ENCODE measurements at regions of chr15 and their contacts with region 1.

Region 1: DNA sequence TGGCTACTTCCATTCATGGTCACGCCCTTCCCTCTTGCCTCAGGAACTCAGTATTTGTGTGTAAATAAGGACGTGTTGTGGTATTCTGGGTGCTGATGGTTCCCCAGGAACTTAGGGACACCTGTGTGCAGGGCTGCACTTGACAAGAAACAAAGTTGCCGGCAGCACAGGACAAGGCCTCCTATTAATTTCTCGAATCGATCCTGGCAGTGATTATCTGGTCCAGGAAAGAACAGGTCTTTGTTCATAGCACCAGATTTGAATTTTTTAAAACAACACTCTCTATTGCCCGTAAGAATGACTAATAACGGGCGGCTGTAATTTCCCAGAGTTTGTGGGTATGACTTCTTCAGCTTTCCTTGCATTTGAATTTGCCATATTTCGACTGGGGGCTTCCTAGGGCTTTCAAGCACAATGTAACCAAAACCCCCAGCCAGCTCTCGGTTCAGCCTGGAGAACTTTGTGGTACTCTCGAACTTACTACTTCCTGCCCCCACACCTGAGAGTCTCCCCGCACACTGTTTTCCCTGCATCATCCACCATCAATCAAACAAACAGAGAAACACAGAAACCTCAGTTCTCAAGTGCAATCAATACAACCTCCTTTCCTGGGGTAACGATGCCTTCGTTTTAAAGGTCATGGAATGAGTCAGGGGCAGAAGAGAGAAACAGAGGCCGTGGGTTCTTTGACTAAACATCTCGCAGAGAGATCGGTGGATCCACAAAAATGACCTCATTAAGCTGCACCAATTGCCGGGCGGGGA is 241.7 kb upstream of the ICE2 start:
- DNase-seq: peak; percentile 86
- H3K4me3 Mint-ChIP-seq: peak overlapping the region; percentile 65
- H3K27ac Mint-ChIP-seq: peak overlapping the region; percentile 95
- H3K4me1 Mint-ChIP-seq: peaks cover 64% of the 10 kb centered on the region
- H3K27me3 Mint-ChIP-seq: no peaks in the 10 kb centered on the region

Region 2: GRCh38 chr15:60423537-60423936 is 297.1 kb before region 1 on chr15:
- CTCF ChIA-PET with region 1: no interaction called
- POLR2A ChIA-PET with region 1: no interaction called
- intact Hi-C with region 1: no loop called
- DNase-seq: peak; percentile 17
- H3K4me3 Mint-ChIP-seq: no peak overlapping the region
- H3K27ac Mint-ChIP-seq: no peak overlapping the region
- H3K4me1 Mint-ChIP-seq: peaks cover 19% of the 10 kb centered on the region
- H3K27me3 Mint-ChIP-seq: no peaks in the 10 kb centered on the region

Region 3: GRCh38 chr15:60592371-60593169 is 128.1 kb before region 1 on chr15:
- CTCF ChIA-PET with region 1: interaction called, 26 read pairs
- POLR2A ChIA-PET with region 1: interaction called, 12 read pairs
- intact Hi-C with region 1: no loop called
- DNase-seq: peak; percentile 91
- H3K4me3 Mint-ChIP-seq: peak overlapping the region; percentile 81
- H3K27ac Mint-ChIP-seq: peak overlapping the region; percentile 82
- H3K4me1 Mint-ChIP-seq: peaks cover 45% of the 10 kb centered on the region
- H3K27me3 Mint-ChIP-seq: no peaks in the 10 kb centered on the region

Region 4: GRCh38 chr15:60679256-60679655 is 41.4 kb before region 1 on chr15:
- CTCF ChIA-PET with region 1: no interaction called
- POLR2A ChIA-PET with region 1: interaction called, 3 read pairs
- intact Hi-C with region 1: loop called (anchors 5 kb)
- DNase-seq: no peak
- H3K4me3 Mint-ChIP-seq: no peak overlapping the region
- H3K27ac Mint-ChIP-seq: no peak overlapping the region
- H3K4me1 Mint-ChIP-seq: peaks cover 32% of the 10 kb centered on the region
- H3K27me3 Mint-ChIP-seq: no peaks in the 10 kb centered on the region

Region 5: GRCh38 chr15:60704129-60704528 is 16.5 kb before region 1 on chr15:
- CTCF ChIA-PET with region 1: interaction called, 6 read pairs
- POLR2A ChIA-PET with region 1: interaction called, 11 read pairs
- intact Hi-C with region 1: loop called (anchors 1 kb)
- DNase-seq: peak; percentile 66
- H3K4me3 Mint-ChIP-seq: peak overlapping the region; percentile 45
- H3K27ac Mint-ChIP-seq: peak overlapping the region; percentile 57
- H3K4me1 Mint-ChIP-seq: peaks cover 77% of the 10 kb centered on the region
- H3K27me3 Mint-ChIP-seq: no peaks in the 10 kb centered on the region

Region 6: GRCh38 chr15:60774829-60775463 is 54.3 kb after region 1 on chr15:
- CTCF ChIA-PET with region 1: no interaction called
- POLR2A ChIA-PET with region 1: interaction called, 5 read pairs
- intact Hi-C with region 1: loop called (anchors 1 kb)
- DNase-seq: peak; percentile 37
- H3K4me3 Mint-ChIP-seq: peak overlapping the region; percentile 11
- H3K27ac Mint-ChIP-seq: peak overlapping the region; percentile 86
- H3K4me1 Mint-ChIP-seq: peaks cover 71% of the 10 kb centered on the region
- H3K27me3 Mint-ChIP-seq: no peaks in the 10 kb centered on the region

Region 7: DNA sequence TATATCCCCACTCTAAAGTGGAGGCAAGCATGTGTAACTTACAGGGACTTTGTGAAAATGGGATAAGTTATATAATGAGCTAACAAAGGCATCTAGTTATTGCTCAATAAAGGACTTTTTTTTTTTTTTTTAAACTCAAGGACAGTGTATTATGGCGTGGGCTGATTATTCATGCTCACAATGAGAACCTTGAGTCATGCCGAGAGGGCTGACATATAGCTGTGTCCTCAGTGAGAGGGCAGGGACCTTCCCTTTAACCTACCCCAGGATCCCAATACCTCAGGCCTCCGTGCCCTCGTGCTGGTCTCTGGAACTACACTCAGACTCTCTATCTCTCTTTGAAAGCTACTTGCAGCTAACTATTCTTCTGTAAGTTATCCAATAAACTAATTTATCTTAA is 78.1 kb after region 1 on chr15:
- CTCF ChIA-PET with region 1: interaction called, 15 read pairs
- POLR2A ChIA-PET with region 1: interaction called, 15 read pairs
- intact Hi-C with region 1: loop called (anchors 1 kb)
- DNase-seq: peak; percentile 84
- H3K4me3 Mint-ChIP-seq: peak overlapping the region; percentile 28
- H3K27ac Mint-ChIP-seq: peak overlapping the region; percentile 82
- H3K4me1 Mint-ChIP-seq: peaks cover 90% of the 10 kb centered on the region
- H3K27me3 Mint-ChIP-seq: no peaks in the 10 kb centered on the region

Region 8: DNA sequence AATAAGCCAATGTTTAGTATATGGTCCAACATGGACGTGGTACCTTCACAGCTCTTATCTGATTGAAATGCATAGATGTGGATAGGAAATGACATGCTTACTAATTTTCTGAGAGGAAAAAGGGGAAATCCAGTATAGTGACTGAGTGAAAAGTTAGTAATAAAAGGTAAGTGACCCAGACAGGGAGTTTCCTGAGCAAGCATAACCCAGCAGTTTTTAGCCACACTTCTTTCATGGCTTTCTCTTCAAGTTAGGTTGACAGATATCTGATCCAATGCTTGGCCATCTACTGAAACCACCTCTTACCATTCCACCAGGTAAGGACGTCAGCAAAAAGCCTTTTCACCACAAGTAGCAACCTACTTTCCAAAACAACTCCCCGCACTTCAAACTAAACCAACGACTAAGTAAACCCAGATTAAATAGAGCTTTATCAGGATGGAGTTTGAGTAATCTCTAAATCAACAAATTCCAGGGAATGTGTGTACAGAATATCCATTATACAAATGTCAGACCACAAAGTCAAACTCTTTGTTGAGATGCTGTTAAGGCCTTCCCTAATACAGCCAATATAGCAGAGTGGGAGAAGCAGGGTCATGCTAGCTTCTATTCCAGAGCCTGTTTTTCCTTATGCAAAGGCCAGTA is 178.8 kb after region 1 on chr15:
- CTCF ChIA-PET with region 1: interaction called, 8 read pairs
- POLR2A ChIA-PET with region 1: interaction called, 8 read pairs
- intact Hi-C with region 1: loop called (anchors 1 kb)
- DNase-seq: peak; percentile 48
- H3K4me3 Mint-ChIP-seq: no peak overlapping the region
- H3K27ac Mint-ChIP-seq: peak overlapping the region; percentile 57
- H3K4me1 Mint-ChIP-seq: peaks cover 64% of the 10 kb centered on the region
- H3K27me3 Mint-ChIP-seq: peaks cover 4% of the 10 kb centered on the region

Measured in activated CD4-positive, alpha-beta memory T cell treated with anti-CD3 and anti-CD28 coated beads for 36 hours (primary cell).